Psoas muscle (tissue), 8 donors: ENCODE measurements at regions of chr5 and their contacts with region 1.

Region 1: DNA sequence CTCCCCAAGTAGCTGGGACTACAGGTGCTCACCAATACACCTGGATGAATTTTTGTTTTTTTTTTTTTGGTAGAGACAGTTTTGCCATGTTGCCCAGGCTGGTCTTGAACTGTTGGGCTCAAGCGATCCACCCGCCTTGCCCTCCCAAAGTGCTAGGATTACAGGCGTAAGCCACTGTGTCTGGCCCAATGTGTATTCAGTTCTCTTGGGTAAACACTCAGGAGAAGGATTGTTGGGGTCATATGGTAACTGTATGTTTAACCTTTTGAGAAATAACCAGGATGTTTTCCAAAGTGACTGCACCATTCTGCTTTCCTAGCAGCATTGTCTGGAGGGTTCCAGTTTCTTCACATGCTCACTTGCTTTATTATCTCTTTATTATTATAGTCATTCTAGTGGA is 67.4 kb downstream of the TNPO1 start:
- DNase-seq: no peak
- ATAC-seq: no peak
- H3K4me3 ChIP-seq: no peak overlapping the region
- H3K27ac ChIP-seq: no peak overlapping the region
- H3K4me1 ChIP-seq: no peaks in the 10 kb centered on the region
- H3K27me3 ChIP-seq: no peaks in the 10 kb centered on the region
- CTCF ChIP-seq: no peak

Region 2: DNA sequence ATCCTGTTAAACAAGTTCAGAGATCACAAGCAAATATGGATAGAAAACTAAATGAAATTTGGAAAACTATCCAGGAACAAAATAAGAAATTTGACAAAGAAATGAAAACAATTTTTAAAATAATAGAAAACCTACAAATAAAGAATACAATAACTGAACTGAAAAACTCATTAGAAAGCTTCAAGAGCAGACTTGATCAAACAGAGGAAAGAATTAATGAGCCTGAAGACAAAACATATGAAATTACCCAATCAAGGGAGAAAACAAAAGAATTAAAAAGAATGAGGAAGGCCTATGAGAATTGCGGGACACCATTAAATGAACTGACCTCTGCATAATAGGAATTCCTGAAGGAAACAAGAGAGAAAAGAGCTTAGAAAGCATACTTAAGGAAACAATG is 107.2 kb before region 1 on chr5:
- intact Hi-C with region 1: no loop called
- DNase-seq: no peak
- ATAC-seq: no peak
- H3K4me3 ChIP-seq: no peak overlapping the region
- H3K27ac ChIP-seq: no peak overlapping the region
- H3K4me1 ChIP-seq: no peaks in the 10 kb centered on the region
- H3K27me3 ChIP-seq: no peaks in the 10 kb centered on the region
- CTCF ChIP-seq: no peak

Region 3: DNA sequence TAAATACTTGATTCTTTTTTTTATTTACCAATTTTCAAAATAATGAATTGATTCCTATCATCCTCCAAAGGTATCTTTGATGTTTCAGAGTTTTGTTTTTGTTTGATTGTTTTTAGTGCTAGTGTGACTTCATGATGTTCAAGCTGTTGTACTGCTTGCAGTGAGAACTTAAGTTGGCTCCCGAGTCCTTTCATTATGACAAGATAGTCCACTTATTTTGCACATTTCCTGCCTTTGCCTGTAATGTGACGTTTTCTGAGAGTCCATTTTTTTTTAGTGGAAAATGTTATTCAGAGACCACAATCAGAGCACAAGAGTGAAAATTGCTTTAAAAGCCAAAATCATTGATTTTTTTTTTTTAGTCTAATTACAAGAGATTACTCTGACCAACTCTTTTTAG is 11.9 kb after region 1 on chr5:
- intact Hi-C with region 1: loop called in 1 of 2 experiments (anchors 2 kb)
- DNase-seq: no peak
- ATAC-seq: no peak
- H3K4me3 ChIP-seq: no peak overlapping the region
- H3K27ac ChIP-seq: no peak overlapping the region
- H3K4me1 ChIP-seq: no peaks in the 10 kb centered on the region
- H3K27me3 ChIP-seq: no peaks in the 10 kb centered on the region
- CTCF ChIP-seq: no peak

Region 4: DNA sequence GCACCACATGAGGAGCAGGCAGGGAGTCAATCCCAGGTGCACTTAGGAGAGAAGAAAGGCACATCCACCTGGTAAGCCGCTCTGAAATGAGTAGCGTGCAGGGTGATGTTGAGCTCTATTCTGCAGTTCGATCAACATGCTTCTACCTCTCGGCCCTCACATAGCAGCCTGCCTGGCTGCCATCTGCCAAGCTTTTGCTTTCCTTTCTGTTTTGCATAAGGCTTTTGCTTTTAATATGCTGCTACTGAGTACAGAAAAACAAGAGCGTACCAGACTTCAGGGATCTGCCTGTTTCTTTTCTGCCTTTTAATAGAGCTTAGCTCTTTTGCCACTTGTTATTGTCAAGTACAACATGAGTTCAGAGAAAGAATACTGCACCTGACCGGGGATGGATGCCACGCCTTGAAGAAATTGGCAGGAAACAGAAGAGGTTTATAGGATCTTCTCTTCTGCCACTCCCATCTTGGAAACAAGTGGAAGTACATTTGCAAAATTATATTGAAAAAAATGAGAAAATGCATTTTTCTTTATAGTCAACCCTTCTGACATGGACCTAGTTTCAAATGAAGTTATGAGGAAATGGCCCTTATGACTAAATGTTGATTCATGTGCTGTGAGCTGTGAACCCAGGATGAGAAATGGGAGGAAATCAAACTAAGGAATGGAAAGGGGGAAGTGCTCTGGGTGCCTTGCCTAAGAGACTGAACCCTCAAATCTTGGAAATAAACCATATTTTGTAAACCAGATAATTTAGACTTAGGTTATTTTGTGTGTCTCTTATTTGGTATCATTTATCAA is 68.0 kb after region 1 on chr5:
- intact Hi-C with region 1: no loop called
- DNase-seq: no peak
- ATAC-seq: no peak
- H3K4me3 ChIP-seq: no peak overlapping the region
- H3K27ac ChIP-seq: no peak overlapping the region
- H3K4me1 ChIP-seq: peaks cover 12% of the 10 kb centered on the region
- H3K27me3 ChIP-seq: no peaks in the 10 kb centered on the region
- CTCF ChIP-seq: no peak